MCF 10A (cell line): ENCODE measurements at regions of chr5 and their contacts with region 1.

Region 1: GRCh38 chr5:165630261-165630778 is 2124.9 kb downstream of the MAT2B start:
- DNase-seq: peak; percentile 87
- H3K4me3 Mint-ChIP-seq: no peak overlapping the region
- H3K27ac Mint-ChIP-seq: no peak overlapping the region
- H3K4me1 Mint-ChIP-seq: peaks cover 11% of the 10 kb centered on the region
- H3K27me3 Mint-ChIP-seq: no peaks in the 10 kb centered on the region
- CTCF ChIP-seq: peak; percentile 84

Region 2: GRCh38 chr5:165277661-165278060 is 352.7 kb before region 1 on chr5:
- CTCF ChIA-PET with region 1: no interaction called
- POLR2A ChIA-PET with region 1: no interaction called
- intact Hi-C with region 1: no loop called
- DNase-seq: no peak
- H3K4me3 Mint-ChIP-seq: no peak overlapping the region
- H3K27ac Mint-ChIP-seq: no peak overlapping the region
- H3K4me1 Mint-ChIP-seq: no peaks in the 10 kb centered on the region
- H3K27me3 Mint-ChIP-seq: no peaks in the 10 kb centered on the region
- CTCF ChIP-seq: no peak

Region 3: GRCh38 chr5:165616490-165617430 is 13.6 kb before region 1 on chr5:
- CTCF ChIA-PET with region 1: interaction called, 29 read pairs
- POLR2A ChIA-PET with region 1: no interaction called
- intact Hi-C with region 1: no loop called
- DNase-seq: peak; percentile 74
- H3K4me3 Mint-ChIP-seq: no peak overlapping the region
- H3K27ac Mint-ChIP-seq: no peak overlapping the region
- H3K4me1 Mint-ChIP-seq: peaks cover 22% of the 10 kb centered on the region
- H3K27me3 Mint-ChIP-seq: no peaks in the 10 kb centered on the region
- CTCF ChIP-seq: peak; percentile 26

Region 4: GRCh38 chr5:165728425-165728824 is 98.1 kb after region 1 on chr5:
- CTCF ChIA-PET with region 1: no interaction called
- POLR2A ChIA-PET with region 1: no interaction called
- intact Hi-C with region 1: no loop called
- DNase-seq: no peak
- H3K4me3 Mint-ChIP-seq: no peak overlapping the region
- H3K27ac Mint-ChIP-seq: no peak overlapping the region
- H3K4me1 Mint-ChIP-seq: peaks cover 23% of the 10 kb centered on the region
- H3K27me3 Mint-ChIP-seq: no peaks in the 10 kb centered on the region
- CTCF ChIP-seq: no peak

Region 5: DNA sequence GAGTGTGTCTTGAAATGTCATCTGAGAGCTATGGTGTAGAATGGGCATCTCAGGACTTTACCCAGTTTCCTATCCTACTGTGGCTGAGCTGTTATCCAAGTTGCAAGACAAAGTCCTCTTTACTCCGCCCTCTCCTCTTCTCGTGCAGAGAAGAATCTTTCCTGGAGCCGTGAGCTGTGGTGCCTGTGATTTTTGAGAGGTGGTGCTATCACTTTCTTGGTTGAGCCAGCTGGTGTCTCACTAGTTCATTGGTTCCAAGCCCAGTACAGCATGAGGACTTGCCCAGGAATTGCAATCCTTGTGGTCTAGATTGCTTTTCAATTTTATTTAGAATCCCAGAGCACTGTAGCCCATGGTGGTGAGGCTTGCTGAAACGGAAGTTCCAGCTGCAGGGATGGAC is 175.4 kb after region 1 on chr5:
- CTCF ChIA-PET with region 1: interaction called, 14 read pairs
- POLR2A ChIA-PET with region 1: no interaction called
- intact Hi-C with region 1: no loop called
- DNase-seq: peak; percentile 47
- H3K4me3 Mint-ChIP-seq: no peak overlapping the region
- H3K27ac Mint-ChIP-seq: no peak overlapping the region
- H3K4me1 Mint-ChIP-seq: no peaks in the 10 kb centered on the region
- H3K27me3 Mint-ChIP-seq: no peaks in the 10 kb centered on the region
- CTCF ChIP-seq: peak; percentile 21

Region 6: DNA sequence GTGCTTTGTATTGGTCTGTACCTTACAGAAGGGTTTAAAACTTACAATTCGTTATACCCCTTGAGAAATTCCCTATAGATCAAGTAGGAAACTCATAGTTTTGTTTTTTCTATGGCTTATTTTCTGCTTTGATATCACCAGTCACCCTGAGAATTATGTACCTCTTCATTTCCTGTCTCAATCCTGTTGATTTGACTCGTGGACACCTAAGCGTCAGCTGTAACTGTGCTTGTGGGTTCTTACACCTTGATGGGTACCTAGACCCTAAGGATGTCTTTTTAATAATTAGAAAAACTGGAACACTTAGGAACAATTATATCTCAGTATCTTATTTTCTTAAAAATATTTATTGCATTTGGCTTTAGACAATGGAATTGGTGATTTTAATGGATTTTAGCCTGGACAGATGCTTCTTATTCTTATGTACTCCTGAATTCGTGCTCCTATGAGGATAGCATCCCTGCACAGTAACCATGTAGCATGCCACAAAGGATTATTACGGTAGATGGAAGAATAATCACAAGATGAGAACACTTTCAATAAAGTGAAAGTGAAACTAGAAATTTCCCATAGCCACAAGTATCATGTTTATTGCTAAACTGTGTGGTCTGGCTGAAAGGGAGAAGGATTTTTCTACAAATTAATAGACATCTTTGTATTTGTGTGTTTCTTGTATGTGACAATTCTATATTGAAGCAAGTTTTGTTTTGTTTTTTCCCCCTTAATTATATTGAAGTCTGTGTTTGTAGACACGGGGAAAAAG is 740.8 kb after region 1 on chr5:
- CTCF ChIA-PET with region 1: interaction called, 5 read pairs
- POLR2A ChIA-PET with region 1: no interaction called
- intact Hi-C with region 1: loop called (anchors 10 kb)
- DNase-seq: peak; percentile 46
- H3K4me3 Mint-ChIP-seq: peak overlapping the region; percentile 64
- H3K27ac Mint-ChIP-seq: peak overlapping the region; percentile 62
- H3K4me1 Mint-ChIP-seq: no peaks in the 10 kb centered on the region
- H3K27me3 Mint-ChIP-seq: no peaks in the 10 kb centered on the region
- CTCF ChIP-seq: no peak

Region 7: DNA sequence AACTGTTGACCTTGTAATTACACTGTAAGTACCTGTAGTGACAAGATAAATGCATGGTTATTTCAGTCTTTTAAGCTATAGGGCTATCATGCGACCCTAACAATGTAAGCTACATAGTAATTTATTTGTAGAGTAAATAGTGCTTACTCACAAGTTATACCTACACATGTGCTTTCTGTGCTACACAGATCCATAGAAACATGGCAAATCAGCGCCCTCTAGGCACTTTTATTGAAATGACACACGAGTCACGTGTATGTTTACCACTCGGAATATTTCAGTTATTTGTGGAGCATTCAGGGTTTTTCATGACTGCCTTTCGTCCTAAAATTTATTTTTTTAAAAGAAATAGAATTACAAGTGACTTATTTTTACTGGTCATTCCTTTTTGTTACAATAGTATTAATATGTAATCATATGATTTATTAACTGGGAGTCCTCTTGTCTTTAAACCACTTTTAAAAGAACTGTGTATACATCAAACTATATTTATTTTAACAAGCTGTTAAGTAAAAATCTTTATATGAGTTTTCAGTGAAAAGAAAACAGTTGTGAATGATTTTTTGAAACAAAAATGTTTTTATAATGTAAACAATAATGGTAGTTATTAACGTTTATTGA is 1418.8 kb after region 1 on chr5:
- CTCF ChIA-PET with region 1: interaction called, 25 read pairs
- POLR2A ChIA-PET with region 1: no interaction called
- intact Hi-C with region 1: loop called (anchors 10 kb)
- DNase-seq: peak; percentile 85
- H3K4me3 Mint-ChIP-seq: no peak overlapping the region
- H3K27ac Mint-ChIP-seq: peak overlapping the region; percentile 14
- H3K4me1 Mint-ChIP-seq: peaks cover 20% of the 10 kb centered on the region
- H3K27me3 Mint-ChIP-seq: no peaks in the 10 kb centered on the region
- CTCF ChIP-seq: peak; percentile 85

Region 8: GRCh38 chr5:167244583-167244982 is 1614.3 kb after region 1 on chr5:
- CTCF ChIA-PET with region 1: interaction called, 3 read pairs
- POLR2A ChIA-PET with region 1: no interaction called
- intact Hi-C with region 1: loop called (anchors 1 kb)
- DNase-seq: peak; percentile 58
- H3K4me3 Mint-ChIP-seq: no peak overlapping the region
- H3K27ac Mint-ChIP-seq: no peak overlapping the region
- H3K4me1 Mint-ChIP-seq: peaks cover 19% of the 10 kb centered on the region
- H3K27me3 Mint-ChIP-seq: no peaks in the 10 kb centered on the region
- CTCF ChIP-seq: peak; percentile 67

Region 9: GRCh38 chr5:167573370-167574127 is 1943.2 kb after region 1 on chr5:
- CTCF ChIA-PET with region 1: interaction called, 16 read pairs
- POLR2A ChIA-PET with region 1: no interaction called
- intact Hi-C with region 1: no loop called
- DNase-seq: peak; percentile 79
- H3K4me3 Mint-ChIP-seq: peak overlapping the region; percentile 50
- H3K27ac Mint-ChIP-seq: no peak overlapping the region
- H3K4me1 Mint-ChIP-seq: peaks cover 26% of the 10 kb centered on the region
- H3K27me3 Mint-ChIP-seq: peaks cover 88% of the 10 kb centered on the region
- CTCF ChIP-seq: no peak